Endothelial cell of umbilical vein (primary cell): ENCODE measurements at regions of chr13 and their contacts with region 1.

Region 1: DNA sequence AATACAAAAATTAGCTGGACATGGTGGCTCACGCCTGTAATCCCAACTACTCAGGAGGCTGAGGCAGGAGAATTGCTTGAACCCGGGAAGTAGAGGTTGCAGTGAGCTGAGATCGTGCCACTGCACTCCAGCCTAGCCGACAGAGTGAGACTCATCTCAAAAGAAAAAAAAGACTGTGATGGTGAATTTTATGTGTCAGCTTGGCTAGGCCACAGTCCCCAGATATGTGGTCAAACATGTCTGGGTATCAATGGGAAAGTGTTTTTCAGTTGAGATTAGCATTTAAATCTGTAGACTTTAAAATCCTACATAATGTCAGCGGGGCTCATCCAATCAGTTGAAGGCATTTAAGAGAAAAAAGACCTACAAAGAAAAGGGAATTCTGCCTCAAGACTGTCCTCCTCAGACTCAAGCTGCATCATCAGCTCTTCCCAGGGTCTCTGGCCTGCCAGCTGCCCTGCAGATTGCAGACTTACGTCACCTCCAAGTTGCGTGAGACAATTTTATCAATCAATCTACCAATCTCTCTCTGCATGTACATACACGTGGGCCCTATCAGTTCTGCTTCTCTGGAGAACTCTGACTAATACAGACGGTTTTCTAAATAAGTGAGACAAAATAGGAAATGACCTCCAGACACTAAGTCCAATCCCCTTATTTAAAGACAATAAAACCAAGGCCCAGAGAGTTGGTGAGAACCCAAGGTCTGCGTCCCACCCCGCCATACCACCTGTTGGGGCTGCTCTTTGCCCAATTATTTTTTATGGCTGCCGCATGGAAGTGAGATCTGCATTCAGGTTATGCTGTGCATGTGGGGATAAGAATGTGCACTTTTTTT is 99.2 kb downstream of the ABCC4 start:
- DNase-seq: peak; percentile 80
- H3K4me3 ChIP-seq: no peak overlapping the region
- H3K27ac ChIP-seq: peak overlapping the region; percentile 52
- H3K4me1 ChIP-seq: peaks cover 23% of the 10 kb centered on the region
- H3K27me3 ChIP-seq: no peaks in the 10 kb centered on the region
- CTCF ChIP-seq: no peak
- POLR2A ChIP-seq: no peak

Region 2: DNA sequence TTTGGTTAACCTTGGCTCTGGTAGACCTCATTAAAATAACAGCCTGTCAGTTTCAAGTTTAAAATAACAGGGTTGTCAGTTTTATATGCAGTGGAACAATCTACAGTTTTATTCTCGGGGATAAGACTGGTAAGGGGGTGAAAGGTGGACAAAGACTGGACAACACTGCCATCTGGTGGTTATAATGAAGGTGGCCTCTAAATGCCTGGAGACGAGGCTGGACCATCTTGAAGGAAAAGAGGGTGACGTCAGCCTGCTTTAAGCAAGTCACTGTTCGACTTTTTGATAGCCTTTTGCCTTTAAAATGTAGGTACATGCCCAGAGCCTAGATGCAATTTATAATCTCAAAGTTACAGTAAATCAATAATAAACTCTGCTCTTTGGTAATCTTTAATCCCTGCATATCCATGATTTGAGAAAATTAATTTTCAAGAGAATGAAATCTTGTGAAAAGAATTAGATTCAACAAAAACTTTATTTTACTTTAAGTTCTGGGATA is 839.6 kb before region 1 on chr13:
- CTCF ChIA-PET with region 1: no interaction called
- POLR2A ChIA-PET with region 1: no interaction called
- dilution Hi-C with region 1: no loop called
- intact Hi-C with region 1: no loop called
- DNase-seq: peak; percentile 84
- H3K4me3 ChIP-seq: no peak overlapping the region
- H3K27ac ChIP-seq: no peak overlapping the region
- H3K4me1 ChIP-seq: no peaks in the 10 kb centered on the region
- H3K27me3 ChIP-seq: no peaks in the 10 kb centered on the region
- CTCF ChIP-seq: peak; percentile 69 to 76
- POLR2A ChIP-seq: no peak

Region 3: GRCh38 chr13:95256086-95256485 is 54.1 kb after region 1 on chr13:
- CTCF ChIA-PET with region 1: no interaction called
- POLR2A ChIA-PET with region 1: interaction called, 3 read pairs
- dilution Hi-C with region 1: no loop called
- intact Hi-C with region 1: loop called (anchors 5 kb)
- DNase-seq: peak; percentile 85
- H3K4me3 ChIP-seq: no peak overlapping the region
- H3K27ac ChIP-seq: peak overlapping the region; percentile 47
- H3K4me1 ChIP-seq: peaks cover 36% of the 10 kb centered on the region
- H3K27me3 ChIP-seq: no peaks in the 10 kb centered on the region
- CTCF ChIP-seq: no peak
- POLR2A ChIP-seq: no peak

Region 4: DNA sequence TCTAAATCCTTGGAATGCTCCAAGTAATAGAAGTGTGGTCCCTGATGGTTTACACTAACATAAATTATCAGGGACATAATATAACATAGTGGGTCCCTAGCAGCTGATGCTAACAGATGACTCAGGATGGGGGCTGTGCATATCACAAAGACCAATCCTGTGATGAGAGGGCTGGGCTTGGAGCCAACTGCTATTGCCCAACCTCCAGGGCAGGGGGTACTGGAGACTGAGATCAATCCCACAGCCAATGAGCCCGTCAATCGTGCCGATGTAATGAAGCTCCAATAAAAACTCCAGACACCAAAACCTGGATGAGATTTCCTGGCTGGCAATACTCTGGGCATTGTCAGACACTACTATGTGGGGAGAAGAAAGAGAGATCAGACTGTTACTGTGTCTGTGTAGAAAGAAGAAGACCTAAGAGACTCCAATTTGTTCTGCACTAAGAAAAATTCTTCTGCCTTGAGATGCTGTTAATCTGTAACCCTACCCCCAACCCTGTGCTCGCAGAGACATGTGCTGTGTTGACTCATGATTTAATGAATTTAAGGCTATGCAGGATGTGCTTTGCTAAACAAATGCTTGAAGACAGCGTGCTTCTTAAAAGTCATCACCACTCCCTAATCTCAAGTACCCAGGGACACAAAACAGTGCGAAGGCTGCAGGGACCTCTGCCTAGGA is 65.8 kb after region 1 on chr13:
- CTCF ChIA-PET with region 1: no interaction called
- POLR2A ChIA-PET with region 1: no interaction called
- dilution Hi-C with region 1: no loop called
- intact Hi-C with region 1: loop called (anchors 2 kb)
- DNase-seq: peak; percentile 40
- H3K4me3 ChIP-seq: no peak overlapping the region
- H3K27ac ChIP-seq: peak overlapping the region; percentile 48
- H3K4me1 ChIP-seq: peaks cover 47% of the 10 kb centered on the region
- H3K27me3 ChIP-seq: no peaks in the 10 kb centered on the region
- CTCF ChIP-seq: no peak
- POLR2A ChIP-seq: no peak